Aorta (tissue), 5 donors: ENCODE measurements at regions of chr17 and their contacts with region 1.

Region 1: GRCh38 chr17:73710095-73710592 is 65.9 kb upstream of the SDK2 start:
- DNase-seq: peak; percentile 62 to 81
- ATAC-seq: peak; percentile 69
- H3K4me3 ChIP-seq: no peak overlapping the region
- H3K27ac ChIP-seq: no peak overlapping the region
- H3K4me1 ChIP-seq: no peaks in the 10 kb centered on the region
- H3K27me3 ChIP-seq: no peaks in the 10 kb centered on the region

Region 2: DNA sequence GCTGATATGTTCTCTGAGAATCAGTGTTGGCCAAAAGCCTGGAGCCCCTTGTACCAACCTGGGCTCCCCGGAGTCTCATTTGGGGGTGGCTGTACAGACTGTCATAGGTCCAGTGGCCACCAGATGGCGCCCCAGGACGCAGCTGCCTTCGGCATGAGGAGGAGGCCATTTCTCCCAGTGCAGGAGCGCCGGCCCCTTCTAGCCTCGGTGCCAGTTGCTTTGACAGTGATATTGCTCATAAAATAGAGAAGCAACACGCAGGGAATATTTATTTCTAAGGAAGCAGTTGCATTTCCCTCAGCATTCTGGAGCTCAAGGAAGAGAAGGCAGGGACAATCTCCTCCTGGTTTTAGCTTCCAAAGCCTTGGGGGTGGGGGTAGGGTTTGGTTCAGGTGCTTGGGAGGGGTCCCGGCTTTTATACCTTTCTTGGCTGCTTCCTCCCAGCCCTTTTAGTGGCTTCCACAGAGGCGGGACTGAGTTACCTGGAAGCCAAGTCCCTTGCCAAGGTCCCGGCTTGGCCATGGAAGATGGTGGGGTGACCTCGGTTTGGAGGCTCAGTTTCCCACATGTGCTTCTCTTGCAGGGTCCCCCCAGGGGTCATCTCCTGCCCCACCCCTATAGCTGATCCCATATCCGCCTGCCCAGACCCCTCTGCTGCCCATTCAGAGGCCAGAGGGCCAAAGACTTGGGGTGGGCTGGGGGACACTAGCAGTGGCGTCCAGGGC is 280.5 kb before region 1 on chr17:
- intact Hi-C with region 1: loop called (anchors 1 to 2 kb)
- DNase-seq: peak; percentile 93 to 97
- ATAC-seq: peak; percentile 89
- H3K4me3 ChIP-seq: no peak overlapping the region
- H3K27ac ChIP-seq: no peak overlapping the region
- H3K4me1 ChIP-seq: no peaks in the 10 kb centered on the region
- H3K27me3 ChIP-seq: no peaks in the 10 kb centered on the region

Region 3: DNA sequence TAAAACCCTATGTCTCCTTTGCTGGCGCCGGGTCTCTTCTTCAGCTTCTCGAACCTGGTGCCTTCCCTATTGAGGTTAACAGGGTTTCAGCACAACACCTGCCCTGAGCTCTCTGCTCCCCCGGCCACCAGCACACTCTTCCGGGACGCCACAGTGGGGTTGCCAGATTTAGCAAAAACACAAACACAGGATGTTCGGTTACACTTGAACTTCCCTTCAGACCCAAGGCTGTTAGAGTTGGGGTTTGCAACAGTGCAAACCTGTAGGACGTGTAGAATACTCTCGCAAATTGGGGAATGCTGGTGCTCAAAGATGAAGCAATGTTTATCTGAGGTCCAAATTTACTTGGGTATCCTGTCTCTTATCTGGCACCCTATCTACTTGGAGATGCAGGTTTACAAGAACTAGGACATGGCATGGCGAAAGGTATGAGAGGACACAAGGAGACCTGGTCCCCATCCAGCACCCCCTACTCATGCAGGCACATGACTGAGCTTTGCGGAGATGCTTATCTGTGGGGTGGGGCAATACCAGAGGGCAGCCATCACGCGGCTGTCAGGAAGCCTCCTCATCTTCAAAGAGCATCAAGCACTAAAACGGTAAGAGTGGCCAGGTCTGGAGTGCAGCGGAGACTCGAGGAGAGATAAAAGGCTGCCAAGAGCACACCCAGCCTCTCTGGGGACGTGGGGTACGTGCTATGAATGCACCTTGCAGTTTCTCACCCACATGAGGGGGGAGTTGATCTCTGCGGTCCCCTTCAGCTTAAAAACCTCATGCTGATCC is 118.7 kb before region 1 on chr17:
- intact Hi-C with region 1: loop called in 1 of 2 experiments (anchors 2 kb)
- DNase-seq: no peak
- ATAC-seq: no peak
- H3K4me3 ChIP-seq: no peak overlapping the region
- H3K27ac ChIP-seq: no peak overlapping the region
- H3K4me1 ChIP-seq: no peaks in the 10 kb centered on the region
- H3K27me3 ChIP-seq: no peaks in the 10 kb centered on the region

Region 4: DNA sequence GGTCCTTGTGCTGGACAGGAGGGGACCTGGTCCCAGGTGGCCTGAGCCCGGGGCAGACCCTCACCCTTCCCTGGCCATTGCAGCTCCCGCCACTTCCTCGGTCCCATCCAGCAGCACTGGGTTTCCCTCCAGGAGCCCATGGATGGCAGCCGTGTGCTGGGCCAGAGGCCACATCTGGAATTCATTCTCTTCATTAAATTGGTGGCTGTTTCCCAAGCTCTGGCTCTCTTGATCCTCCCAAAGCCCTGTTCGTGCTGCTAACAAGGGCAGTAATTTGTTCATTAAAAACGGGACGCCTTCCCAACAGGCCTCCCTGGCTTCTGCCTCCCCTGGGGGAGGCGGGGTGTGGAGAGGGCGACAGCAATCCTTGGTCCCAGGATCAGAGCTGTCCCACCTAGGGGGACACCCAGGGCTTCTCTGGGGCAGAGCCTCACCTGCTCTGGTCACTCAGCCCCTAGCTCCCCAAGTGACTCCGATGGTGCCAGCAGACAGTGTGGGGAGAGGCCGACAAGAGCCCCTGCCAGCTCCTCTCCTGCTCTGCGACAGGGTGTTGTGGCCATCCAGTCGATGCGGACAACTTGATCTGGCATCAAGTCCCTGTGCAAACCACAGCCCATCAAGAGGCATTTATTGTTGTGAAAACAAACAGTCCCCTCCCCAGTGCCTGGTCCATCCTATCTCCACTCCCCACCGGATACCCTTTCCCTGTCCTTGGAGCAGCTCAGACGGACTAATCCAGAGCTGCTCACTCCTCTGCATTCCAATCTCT is 109.9 kb before region 1 on chr17:
- intact Hi-C with region 1: loop called in 1 of 2 experiments (anchors 10 kb)
- DNase-seq: no peak
- ATAC-seq: peak; percentile 33
- H3K4me3 ChIP-seq: no peak overlapping the region
- H3K27ac ChIP-seq: no peak overlapping the region
- H3K4me1 ChIP-seq: no peaks in the 10 kb centered on the region
- H3K27me3 ChIP-seq: no peaks in the 10 kb centered on the region

Region 5: DNA sequence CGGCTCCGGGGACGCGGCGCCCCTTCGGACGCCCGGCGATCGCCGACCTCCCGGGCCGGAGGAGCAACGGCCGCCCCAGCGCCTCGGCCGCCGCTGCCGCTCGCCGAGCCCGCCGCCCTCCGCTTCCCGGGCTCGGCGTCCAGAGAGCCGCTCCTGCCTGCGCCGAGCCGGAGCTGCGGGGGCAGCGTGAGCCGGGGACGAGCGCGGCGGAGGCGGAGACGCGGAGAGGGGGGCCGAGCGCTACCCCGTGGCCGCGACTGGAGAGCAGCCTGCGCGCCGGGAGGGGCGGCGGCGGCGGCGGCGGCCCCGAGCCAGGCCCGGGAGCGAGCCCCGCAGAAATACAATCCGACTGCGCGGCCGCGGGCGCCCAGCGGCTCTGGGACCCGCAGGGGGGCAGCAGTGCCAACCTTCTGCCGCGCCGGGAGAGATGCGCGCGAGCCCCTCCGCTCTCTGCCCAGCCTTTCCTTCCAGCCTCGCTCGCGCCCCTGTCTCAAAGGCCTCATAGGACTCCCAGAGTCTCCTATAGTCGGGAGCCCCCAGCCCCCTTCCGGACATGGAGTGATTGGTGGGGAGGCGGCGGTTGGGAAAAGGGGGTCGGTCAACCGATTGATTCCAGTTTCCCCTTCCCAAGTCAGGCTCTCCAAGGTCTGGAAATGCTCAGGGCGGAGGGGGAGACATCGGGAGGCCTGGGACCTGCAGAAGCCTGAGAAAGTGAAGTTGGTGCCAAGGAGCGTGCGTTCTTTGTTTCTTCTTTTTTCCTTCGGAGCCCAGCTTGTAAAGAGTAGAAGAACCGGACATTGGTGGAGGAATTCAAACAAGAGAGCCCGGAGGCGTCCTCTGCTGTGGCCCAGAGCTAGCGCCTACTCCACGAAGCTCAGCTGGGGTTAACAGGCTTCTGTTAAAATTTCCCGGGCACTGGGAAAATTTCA is 64.8 kb before region 1 on chr17:
- intact Hi-C with region 1: loop called in 1 of 2 experiments (anchors 2 kb)
- DNase-seq: peak; percentile 63 to 85
- ATAC-seq: peak; percentile 71
- H3K4me3 ChIP-seq: peak overlapping the region; percentile 48 to 74
- H3K27ac ChIP-seq: peak overlapping the region in 1 of 2 donors; percentile 1
- H3K4me1 ChIP-seq: peaks cover 0 to 4% of the 10 kb centered on the region in 2 donors
- H3K27me3 ChIP-seq: no peaks in the 10 kb centered on the region

Region 6: DNA sequence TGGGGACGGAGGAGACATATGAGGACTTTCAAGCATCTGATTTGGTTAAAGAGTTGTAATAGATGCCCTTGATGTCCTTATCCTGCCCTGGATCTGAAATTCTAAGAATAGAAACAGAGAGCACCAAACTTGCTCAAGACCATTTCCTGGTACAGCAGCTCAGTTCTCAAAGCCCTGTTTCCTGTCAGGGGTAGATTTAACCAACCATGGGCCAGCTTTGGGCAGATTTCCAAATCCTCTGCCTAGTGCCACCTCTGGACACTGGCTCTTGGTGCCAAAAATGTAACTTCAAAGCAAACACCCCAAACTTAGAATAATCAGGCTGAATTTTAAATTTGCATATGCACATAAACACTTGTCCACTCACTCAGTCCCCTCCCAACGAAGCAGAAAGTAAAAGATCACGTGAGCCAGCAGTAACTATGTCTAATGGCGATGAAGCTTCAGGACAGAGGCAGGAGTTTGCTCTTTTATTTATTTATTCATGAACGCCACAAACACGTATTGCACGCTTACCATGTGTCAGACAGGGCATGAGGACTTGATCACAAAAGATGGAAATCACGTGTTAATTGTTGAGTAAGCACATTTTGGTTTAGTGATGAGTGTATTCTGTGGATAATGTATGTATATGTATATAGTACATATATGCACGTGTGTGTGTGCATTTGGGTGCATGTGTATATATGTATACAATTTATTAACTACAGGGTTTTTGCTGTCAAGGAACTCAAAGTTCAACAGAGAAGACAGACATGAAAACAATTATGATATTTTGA is 42.8 kb before region 1 on chr17:
- intact Hi-C with region 1: no loop called
- DNase-seq: no peak
- ATAC-seq: no peak
- H3K4me3 ChIP-seq: no peak overlapping the region
- H3K27ac ChIP-seq: no peak overlapping the region
- H3K4me1 ChIP-seq: no peaks in the 10 kb centered on the region
- H3K27me3 ChIP-seq: no peaks in the 10 kb centered on the region

Region 7: DNA sequence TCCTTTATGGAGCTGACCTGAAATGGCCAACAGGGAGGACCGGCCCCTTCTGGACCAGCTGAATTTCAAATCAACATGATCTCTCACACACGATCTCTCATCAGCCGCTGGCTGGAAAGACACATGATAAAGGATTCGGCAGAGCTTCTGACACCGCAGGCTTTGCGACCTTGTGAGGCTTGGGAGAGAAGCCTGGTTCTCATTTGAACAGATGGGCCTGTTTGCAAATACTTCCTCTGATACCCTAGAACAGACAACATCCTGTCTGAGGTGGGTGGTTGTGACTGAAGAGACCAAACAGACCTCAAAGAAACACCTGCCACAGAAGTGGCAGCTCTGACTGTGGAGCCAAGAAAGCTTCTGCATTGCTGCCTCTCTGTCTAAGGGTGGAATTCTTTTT is 12.0 kb after region 1 on chr17:
- intact Hi-C with region 1: no loop called
- DNase-seq: peak in 1 of 2 donors; percentile 27
- ATAC-seq: no peak
- H3K4me3 ChIP-seq: no peak overlapping the region
- H3K27ac ChIP-seq: no peak overlapping the region
- H3K4me1 ChIP-seq: no peaks in the 10 kb centered on the region
- H3K27me3 ChIP-seq: no peaks in the 10 kb centered on the region